GM23248 (cell line): ENCODE measurements at regions of chr3 and their contacts with region 1.

Region 1: GRCh38 chr3:171566803-171567422 is 106.7 kb upstream of the TNIK start:
- DNase-seq: peak; percentile 58
- H3K4me3 ChIP-seq: no peak overlapping the region
- H3K27ac ChIP-seq: no peak overlapping the region
- H3K4me1 ChIP-seq: peaks cover 9% of the 10 kb centered on the region; the same call in 1 of the 2 replicates
- H3K27me3 ChIP-seq: no peaks in the 10 kb centered on the region

Region 2: GRCh38 chr3:170961616-170962400 is 605.1 kb before region 1 on chr3:
- in situ Hi-C with region 1: loop called (anchors 10 kb)
- DNase-seq: peak; percentile 68
- H3K4me3 ChIP-seq: no peak overlapping the region
- H3K27ac ChIP-seq: no peak overlapping the region
- H3K4me1 ChIP-seq: no peaks in the 10 kb centered on the region; the same call in 1 of the 2 replicates
- H3K27me3 ChIP-seq: no peaks in the 10 kb centered on the region

Region 3: GRCh38 chr3:171049861-171050444 is 517.0 kb before region 1 on chr3:
- in situ Hi-C with region 1: loop called (anchors 25 kb)
- DNase-seq: peak; percentile 85
- H3K4me3 ChIP-seq: no peak overlapping the region
- H3K27ac ChIP-seq: no peak overlapping the region
- H3K4me1 ChIP-seq: peaks cover 12% of the 10 kb centered on the region
- H3K27me3 ChIP-seq: no peaks in the 10 kb centered on the region

Region 4: DNA sequence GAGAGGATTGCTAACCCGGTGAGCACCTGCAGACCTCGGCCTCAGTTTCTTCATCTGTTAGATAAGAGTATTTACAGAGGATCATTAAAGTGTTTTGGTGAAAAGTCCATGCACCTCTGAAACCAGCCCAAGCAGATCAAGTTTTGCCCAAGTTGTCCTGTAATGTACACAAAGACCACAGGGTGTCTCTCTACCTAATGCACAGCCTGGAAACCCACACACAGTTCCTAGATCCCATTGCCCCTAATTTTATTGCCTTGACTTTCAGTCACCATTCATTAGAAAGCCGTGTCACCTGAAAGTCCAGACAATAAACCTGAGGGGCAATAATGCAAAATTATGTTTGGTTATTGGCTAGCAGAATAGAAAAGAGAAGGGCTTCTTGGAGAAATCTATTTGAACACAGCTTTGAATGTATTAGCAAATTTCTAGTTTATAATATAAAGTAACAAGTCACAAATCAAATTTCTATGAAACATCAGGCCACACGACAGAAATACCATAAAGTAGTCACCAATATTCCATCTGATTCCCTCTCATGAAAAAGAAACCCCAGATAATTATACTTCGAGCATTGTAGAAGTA is 379.1 kb before region 1 on chr3:
- in situ Hi-C with region 1: loop called (anchors 25 kb)
- DNase-seq: peak; percentile 63
- H3K4me3 ChIP-seq: no peak overlapping the region
- H3K27ac ChIP-seq: no peak overlapping the region
- H3K4me1 ChIP-seq: peaks cover 34% of the 10 kb centered on the region
- H3K27me3 ChIP-seq: no peaks in the 10 kb centered on the region

Region 5: GRCh38 chr3:171328419-171329082 is 238.4 kb before region 1 on chr3:
- in situ Hi-C with region 1: no loop called
- DNase-seq: peak; percentile 34
- H3K4me3 ChIP-seq: no peak overlapping the region
- H3K27ac ChIP-seq: no peak overlapping the region
- H3K4me1 ChIP-seq: peaks cover 6% of the 10 kb centered on the region; the same call in 1 of the 2 replicates
- H3K27me3 ChIP-seq: no peaks in the 10 kb centered on the region

Region 6: DNA sequence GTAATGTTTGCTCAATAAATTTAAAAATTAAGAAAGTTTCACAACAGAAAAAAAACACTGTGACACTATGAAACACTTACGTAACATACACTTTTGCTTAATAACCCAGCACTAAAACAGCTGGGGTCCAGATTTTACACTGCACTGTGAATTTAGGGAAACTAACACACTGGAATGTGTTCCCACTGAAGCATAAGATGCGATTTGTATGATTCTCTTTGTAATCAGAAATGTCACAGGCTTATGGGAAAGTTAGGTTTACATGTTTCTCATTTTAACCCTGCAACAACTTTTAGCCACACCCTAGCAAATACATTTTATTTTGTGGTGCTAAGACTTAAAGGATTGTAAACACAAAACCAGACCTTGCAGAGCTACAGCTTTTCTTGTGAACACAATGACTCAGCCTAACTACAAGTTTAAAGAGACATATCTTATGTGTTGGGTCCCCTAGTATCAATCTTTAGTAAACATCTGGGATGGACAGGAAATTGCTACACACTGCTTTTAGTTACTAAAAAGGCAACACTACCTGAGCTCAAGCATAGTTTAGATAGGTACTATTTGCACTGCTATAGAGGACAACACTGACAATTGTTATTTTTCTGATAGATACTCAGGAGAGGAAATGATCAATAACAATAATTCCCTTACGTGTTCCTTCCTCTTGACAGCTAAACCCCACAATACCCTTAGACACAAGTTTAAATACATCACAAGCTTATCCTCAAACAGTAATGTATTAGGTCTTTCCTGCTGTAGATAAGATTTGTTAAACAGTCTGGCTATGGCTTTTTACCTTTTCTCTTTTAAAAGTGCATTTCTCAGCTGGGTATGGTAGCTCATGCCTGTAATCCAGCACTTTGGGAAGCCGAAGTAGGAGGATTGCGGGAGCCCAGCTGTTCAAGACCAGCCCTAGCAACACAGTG is 239.6 kb after region 1 on chr3:
- in situ Hi-C with region 1: no loop called
- DNase-seq: peak; percentile 78
- H3K4me3 ChIP-seq: no peak overlapping the region
- H3K27ac ChIP-seq: peak overlapping the region; percentile 49
- H3K4me1 ChIP-seq: peaks cover 47% of the 10 kb centered on the region
- H3K27me3 ChIP-seq: no peaks in the 10 kb centered on the region